AG04450 (cell line): ENCODE measurements at regions of chr15 and their contacts with region 1.

Region 1: GRCh38 chr15:75661091-75661777 is 13.5 kb downstream of the SNX33 start:
- DNase-seq: peak; percentile 81
- H3K4me3 ChIP-seq: peak overlapping the region; percentile 29
- H3K27ac ChIP-seq: peak overlapping the region; percentile 98
- H3K27me3 ChIP-seq: no peaks in the 10 kb centered on the region
- CTCF ChIP-seq: no peak

Region 2: DNA sequence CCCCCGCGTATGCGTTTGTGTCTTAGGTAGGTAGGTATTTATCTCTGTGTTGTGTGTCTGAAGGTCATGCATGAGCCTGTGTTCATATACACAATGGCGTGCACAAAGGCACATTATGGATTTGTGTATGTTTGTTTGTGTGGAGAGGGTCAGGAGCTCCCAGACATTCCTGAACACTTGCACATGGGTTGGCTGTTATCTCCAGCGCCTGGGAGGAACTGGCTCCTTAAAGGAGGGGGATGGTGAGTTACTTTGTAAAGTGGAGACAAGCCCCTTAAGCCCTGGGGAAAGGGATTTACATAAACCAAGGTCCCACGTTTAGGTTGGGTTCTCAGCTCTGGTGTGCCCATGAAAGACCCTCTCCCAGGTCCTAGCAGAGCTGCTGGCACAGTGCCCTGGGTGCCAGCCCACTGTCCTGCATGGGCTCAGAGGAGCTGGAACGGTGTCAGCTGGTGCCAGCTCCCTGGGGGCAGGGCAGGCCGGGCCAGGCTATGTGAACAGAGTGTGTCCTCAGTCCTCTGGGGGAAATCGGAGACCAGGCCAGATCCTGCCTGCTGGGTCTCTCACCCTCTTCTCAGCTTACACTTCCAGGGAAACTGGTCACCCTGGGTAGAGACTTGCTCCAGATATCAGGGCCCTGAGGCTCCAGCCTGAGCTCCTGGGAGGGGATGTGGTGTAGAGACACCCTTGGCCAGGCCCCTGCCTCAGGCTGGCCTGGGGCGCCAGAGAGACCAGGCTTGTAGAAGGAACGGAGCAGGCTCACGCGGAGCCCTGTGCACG is 11.6 kb after region 1 on chr15:
- CTCF ChIA-PET with region 1: no interaction called
- POLR2A ChIA-PET with region 1: interaction called, 32 read pairs
- DNase-seq: peak; percentile 56
- H3K4me3 ChIP-seq: no peak overlapping the region
- H3K27ac ChIP-seq: peak overlapping the region; percentile 87
- H3K27me3 ChIP-seq: no peaks in the 10 kb centered on the region
- CTCF ChIP-seq: no peak

Region 3: DNA sequence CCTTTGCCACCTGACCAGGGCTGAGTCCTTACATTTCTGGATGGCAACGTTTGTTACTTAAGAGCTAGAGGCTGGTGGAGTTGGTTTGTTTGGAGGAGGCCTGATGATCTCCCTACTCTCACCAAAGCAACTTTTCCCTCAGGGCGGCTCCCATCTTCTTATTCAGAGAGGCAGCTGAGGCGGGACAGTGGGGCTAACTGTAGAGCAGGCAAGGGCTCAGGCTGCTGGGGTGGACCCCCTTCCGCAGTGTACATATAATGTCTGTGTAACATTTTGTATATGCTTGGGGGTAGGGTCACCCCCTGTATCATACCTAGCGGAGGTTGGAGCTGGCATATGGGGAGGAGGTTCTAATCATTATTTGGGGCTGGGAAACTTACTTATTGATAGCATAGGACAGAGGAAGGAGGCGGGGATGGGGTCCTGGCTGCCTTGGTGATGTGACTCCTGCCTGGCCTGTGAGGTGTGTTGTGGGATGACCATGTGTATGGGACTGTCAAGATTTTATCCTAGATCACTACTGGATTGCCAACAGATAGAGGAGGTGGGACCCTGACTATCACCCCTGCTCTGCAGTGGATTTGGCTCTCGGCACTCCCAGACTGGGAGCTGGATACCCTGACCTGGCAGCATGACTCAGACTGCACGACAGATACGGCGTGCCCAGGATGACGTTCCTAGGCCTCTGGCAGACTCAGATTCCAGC is 129.6 kb after region 1 on chr15:
- CTCF ChIA-PET with region 1: no interaction called
- POLR2A ChIA-PET with region 1: no interaction called
- DNase-seq: no peak
- H3K4me3 ChIP-seq: no peak overlapping the region
- H3K27ac ChIP-seq: no peak overlapping the region
- H3K27me3 ChIP-seq: peaks cover 42% of the 10 kb centered on the region
- CTCF ChIP-seq: no peak